SK-N-SH (cell line): ENCODE measurements at regions of chr6 and their contacts with region 1.

Region 1: GRCh38 chr6:3231247-3232016 is 4.0 kb upstream of the TUBB2B start:
- DNase-seq: peak; percentile 78
- H3K4me3 ChIP-seq: peak overlapping the region; percentile 84 to 86
- H3K27ac ChIP-seq: peak overlapping the region; percentile 90 to 97
- H3K4me1 ChIP-seq: peaks cover 11% of the 10 kb centered on the region in 2 experiments; a peak in 3 of 4 replicates
- H3K27me3 ChIP-seq: peaks cover 15% of the 10 kb centered on the region; the same call in 1 of the 2 replicates
- CTCF ChIP-seq: no peak
- EP300 ChIP-seq: peak in 1 of 2 experiments; percentile 28; a peak in 1 of 4 replicates
- RAD21 ChIP-seq: peak; percentile 8; the same call in 1 of the 2 replicates

Region 2: GRCh38 chr6:3118353-3119039 is 112.9 kb before region 1 on chr6 and contains the start of gene BPHL:
- CTCF ChIA-PET with region 1: interaction called, 3 read pairs
- POLR2A ChIA-PET with region 1: interaction called, 12 read pairs
- DNase-seq: peak; percentile 100
- H3K4me3 ChIP-seq: peak within 1 kb of the TSS; percentile 84 to 87
- H3K27ac ChIP-seq: peak within 1 kb of the TSS; percentile 95 to 96
- H3K4me1 ChIP-seq: peaks cover 11 to 16% of the 10 kb centered on the region in 2 experiments; a peak in 2 of 4 replicates
- H3K27me3 ChIP-seq: no peaks in the 10 kb centered on the region
- CTCF ChIP-seq: no peak
- EP300 ChIP-seq: no peak
- RAD21 ChIP-seq: no peak
- polyA plus RNA-seq, gene BPHL: 21.7 and 25.6 TPM in 2 replicates

Region 3: GRCh38 chr6:3157131-3157927 is 74.1 kb before region 1 on chr6 and contains the start of gene TUBB2A:
- CTCF ChIA-PET with region 1: interaction called, 4 read pairs
- POLR2A ChIA-PET with region 1: interaction called, 38 read pairs
- DNase-seq: peak; percentile 98
- H3K4me3 ChIP-seq: peak within 1 kb of the TSS; percentile 87 to 95
- H3K27ac ChIP-seq: peak within 1 kb of the TSS; percentile 72 to 74; a peak in 3 of 4 replicates
- H3K4me1 ChIP-seq: peaks cover 5 to 8% of the 10 kb centered on the region in 2 experiments; a peak in 1 of 4 replicates
- H3K27me3 ChIP-seq: no peaks in the 10 kb centered on the region
- CTCF ChIP-seq: peak; percentile 56
- EP300 ChIP-seq: peak in 1 of 2 experiments; percentile 64; a peak in 1 of 4 replicates
- RAD21 ChIP-seq: no peak; the same call in 1 of the 2 replicates
- polyA plus RNA-seq, gene TUBB2A: 169 and 199 TPM in 2 replicates

Region 4: GRCh38 chr6:3162565-3163247 is 68.7 kb before region 1 on chr6:
- CTCF ChIA-PET with region 1: interaction called, 5 read pairs
- POLR2A ChIA-PET with region 1: interaction called, 38 read pairs
- DNase-seq: peak; percentile 98
- H3K4me3 ChIP-seq: peak overlapping the region; percentile 72 to 77
- H3K27ac ChIP-seq: peak overlapping the region; percentile 73 to 91
- H3K4me1 ChIP-seq: peaks cover 5 to 34% of the 10 kb centered on the region in 2 experiments; a peak in 3 of 4 replicates
- H3K27me3 ChIP-seq: no peaks in the 10 kb centered on the region
- CTCF ChIP-seq: peak; percentile 23
- EP300 ChIP-seq: no peak
- RAD21 ChIP-seq: no peak; the same call in 1 of the 2 replicates

Region 5: DNA sequence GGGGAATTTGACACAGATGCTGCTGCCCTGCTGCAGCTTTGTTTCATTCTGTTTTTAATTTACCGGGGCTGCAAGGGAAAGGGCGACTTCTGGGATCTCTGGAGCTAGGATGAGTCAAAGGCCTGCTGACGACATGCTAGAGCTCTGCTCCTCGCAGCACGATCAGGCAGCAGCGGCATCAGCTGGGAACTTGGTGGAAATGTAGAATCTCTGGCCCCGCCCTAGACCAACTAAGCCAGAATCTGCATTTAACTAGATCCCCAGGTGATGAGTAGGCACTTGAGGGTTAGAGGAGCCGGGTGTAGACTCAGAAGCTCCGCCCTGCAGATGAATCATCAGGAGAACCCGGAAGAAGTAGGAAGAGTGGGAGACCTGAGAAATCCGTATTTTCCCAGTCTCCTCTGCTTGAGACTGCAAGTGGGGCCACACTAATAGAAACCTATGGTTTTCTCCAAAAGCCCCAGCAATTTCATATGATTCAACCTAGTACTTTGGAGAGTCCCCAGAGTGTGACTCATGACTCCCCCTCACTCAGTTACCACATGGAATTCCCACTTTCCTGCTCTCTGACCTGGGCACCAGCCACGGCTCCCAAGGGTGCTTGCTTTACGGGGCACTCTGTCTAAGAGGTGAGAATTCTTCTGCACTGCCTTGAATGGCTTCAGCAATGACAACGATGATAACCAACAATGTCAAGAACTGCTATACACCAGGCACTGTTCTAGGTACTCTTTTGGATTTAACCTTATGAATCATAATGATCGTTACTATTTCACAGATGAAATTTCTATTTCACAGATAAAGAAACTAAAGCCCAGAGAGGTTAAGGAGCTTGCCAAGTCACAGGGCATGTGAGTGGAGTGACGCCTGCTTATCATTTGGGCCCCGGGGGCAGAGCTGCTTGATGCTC is 22.1 kb before region 1 on chr6:
- CTCF ChIA-PET with region 1: interaction called, 4 read pairs
- POLR2A ChIA-PET with region 1: interaction called, 18 read pairs
- DNase-seq: peak; percentile 76
- H3K4me3 ChIP-seq: peak overlapping the region; percentile 11 to 17; a peak in 1 of 4 replicates
- H3K27ac ChIP-seq: peak overlapping the region; percentile 78 to 80
- H3K4me1 ChIP-seq: peaks cover 16 to 25% of the 10 kb centered on the region in 2 experiments; a peak in 3 of 4 replicates
- H3K27me3 ChIP-seq: no peaks in the 10 kb centered on the region
- CTCF ChIP-seq: peak; percentile 55
- EP300 ChIP-seq: peak; percentile 51 to 65; a peak in 3 of 4 replicates
- RAD21 ChIP-seq: peak; percentile 76

Region 6: DNA sequence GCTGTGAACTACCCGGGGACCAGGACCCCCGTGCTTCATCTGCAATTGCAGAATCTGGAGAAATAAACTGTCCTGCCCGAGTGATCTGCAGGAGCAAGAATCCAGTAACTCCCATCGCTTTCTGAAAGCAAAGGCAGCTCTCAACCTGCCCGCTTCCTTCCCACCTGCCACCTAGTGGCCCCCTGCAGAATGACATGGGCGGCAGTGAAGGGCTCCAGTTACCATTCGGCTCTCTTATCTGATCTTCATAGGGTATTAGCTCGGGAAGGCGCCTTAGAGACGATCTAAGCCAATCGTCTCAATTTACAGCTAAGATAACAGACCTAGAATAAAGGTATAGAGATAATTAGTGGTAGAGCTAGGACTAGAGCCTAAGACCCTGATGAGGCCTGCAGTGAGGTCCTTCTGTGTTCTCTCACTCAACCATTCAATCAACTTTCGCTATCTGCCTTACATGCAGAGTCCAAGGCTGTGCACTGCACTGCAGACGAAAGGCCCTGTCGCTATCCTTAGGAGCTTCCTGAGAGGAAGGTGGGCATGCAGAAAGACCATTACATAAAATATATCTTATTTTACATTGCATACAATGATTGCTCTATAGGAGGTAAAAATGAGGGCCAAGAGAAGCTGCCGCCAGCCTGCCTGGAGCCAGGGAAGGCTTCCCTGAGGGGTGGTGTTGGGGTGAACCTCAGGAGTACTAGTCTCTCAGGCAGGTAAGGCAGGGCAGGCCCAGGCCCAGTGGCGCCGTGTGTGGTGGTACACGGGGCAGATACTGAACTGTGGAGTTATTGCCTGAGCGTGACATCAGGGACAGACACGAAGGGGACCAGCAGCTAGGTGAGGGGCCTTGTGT is 20.3 kb after region 1 on chr6:
- CTCF ChIA-PET with region 1: interaction called, 63 read pairs
- POLR2A ChIA-PET with region 1: interaction called, 88 read pairs
- DNase-seq: peak; percentile 91
- H3K4me3 ChIP-seq: peak overlapping the region in 1 of 2 experiments; percentile 51; a peak in 1 of 4 replicates
- H3K27ac ChIP-seq: no peak overlapping the region
- H3K4me1 ChIP-seq: peaks cover 15 to 18% of the 10 kb centered on the region in 2 experiments
- H3K27me3 ChIP-seq: no peaks in the 10 kb centered on the region; the same call in 1 of the 2 replicates
- CTCF ChIP-seq: peak; percentile 97
- EP300 ChIP-seq: no peak; a peak in 1 of 4 replicates
- RAD21 ChIP-seq: peak; percentile 86

Region 7: DNA sequence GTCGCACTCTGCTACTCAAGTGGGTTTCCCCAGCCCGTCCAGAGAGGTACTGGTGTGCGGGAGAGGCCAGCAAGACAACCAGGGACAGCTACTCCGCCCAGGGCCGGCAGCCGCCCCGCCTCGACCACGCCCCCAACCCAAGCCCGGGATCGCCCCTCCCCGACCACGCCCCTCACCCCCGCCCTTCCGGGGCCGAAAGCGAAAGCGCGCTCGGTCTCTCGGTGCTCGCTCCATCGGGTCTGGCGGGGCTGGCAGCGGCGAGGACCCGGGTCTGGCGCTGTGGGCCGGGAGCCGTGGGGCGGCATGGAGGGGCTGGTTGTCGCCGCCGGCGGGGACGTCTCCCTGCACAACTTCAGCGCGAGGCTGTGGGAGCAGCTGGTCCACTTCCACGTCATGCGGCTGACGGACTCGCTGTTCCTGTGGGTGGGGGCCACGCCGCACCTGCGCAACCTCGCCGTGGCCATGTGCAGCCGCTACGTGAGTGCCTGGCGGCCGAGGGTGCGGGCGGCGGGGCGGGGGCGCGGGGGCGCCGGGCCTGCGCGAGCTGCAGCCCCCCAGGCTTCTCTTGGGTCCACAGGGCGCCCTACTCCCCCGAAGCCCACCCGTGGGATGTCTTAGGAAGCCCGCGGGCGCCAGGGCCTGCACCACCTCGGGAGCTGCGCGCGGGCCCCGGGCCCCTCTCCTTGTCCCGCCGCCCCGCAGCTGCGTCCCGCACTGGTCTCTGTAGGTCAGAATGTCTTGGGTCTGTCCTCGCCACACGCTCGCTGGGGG is 27.5 kb after region 1 on chr6 and contains the start of gene PSMG4:
- CTCF ChIA-PET with region 1: interaction called, 3 read pairs
- POLR2A ChIA-PET with region 1: interaction called, 21 read pairs
- DNase-seq: peak; percentile 100
- H3K4me3 ChIP-seq: peak within 1 kb of the TSS; percentile 75 to 88
- H3K27ac ChIP-seq: peak within 1 kb of the TSS; percentile 40 to 84; a peak in 3 of 4 replicates
- H3K4me1 ChIP-seq: peaks cover 6 to 23% of the 10 kb centered on the region in 2 experiments; a peak in 1 of 4 replicates
- H3K27me3 ChIP-seq: no peaks in the 10 kb centered on the region; the same call in 1 of the 2 replicates
- CTCF ChIP-seq: no peak
- EP300 ChIP-seq: 0 out of 4 replicates have a peak, but pooled peaks of 1 of the 2 experiments have one; percentile 16
- RAD21 ChIP-seq: no peak
- polyA plus RNA-seq, gene PSMG4: 60.0 and 61.3 TPM in 2 replicates

Region 8: GRCh38 chr6:3585320-3585928 is 354.0 kb after region 1 on chr6:
- CTCF ChIA-PET with region 1: no interaction called
- POLR2A ChIA-PET with region 1: no interaction called
- DNase-seq: no peak
- H3K4me3 ChIP-seq: no peak overlapping the region
- H3K27ac ChIP-seq: no peak overlapping the region
- H3K4me1 ChIP-seq: no peaks in the 10 kb centered on the region
- H3K27me3 ChIP-seq: no peaks in the 10 kb centered on the region; the same call in 1 of the 2 replicates
- CTCF ChIP-seq: no peak
- EP300 ChIP-seq: no peak; a peak in 1 of 4 replicates
- RAD21 ChIP-seq: no peak